Activated T-helper 2 cell treated with anti-CD3 and anti-CD28 coated beads, Interferon-gamma antibody, Interleukin-2, Interleukin-4, amounts not matched to agents 10 μg/mL and 5 μg/mL and 100 μg/mL, durations not matched to agents 14 hours and 24 hours and 36 hours (primary cell): ENCODE measurements at regions of chr7 and their contacts with region 1.

Region 1: DNA sequence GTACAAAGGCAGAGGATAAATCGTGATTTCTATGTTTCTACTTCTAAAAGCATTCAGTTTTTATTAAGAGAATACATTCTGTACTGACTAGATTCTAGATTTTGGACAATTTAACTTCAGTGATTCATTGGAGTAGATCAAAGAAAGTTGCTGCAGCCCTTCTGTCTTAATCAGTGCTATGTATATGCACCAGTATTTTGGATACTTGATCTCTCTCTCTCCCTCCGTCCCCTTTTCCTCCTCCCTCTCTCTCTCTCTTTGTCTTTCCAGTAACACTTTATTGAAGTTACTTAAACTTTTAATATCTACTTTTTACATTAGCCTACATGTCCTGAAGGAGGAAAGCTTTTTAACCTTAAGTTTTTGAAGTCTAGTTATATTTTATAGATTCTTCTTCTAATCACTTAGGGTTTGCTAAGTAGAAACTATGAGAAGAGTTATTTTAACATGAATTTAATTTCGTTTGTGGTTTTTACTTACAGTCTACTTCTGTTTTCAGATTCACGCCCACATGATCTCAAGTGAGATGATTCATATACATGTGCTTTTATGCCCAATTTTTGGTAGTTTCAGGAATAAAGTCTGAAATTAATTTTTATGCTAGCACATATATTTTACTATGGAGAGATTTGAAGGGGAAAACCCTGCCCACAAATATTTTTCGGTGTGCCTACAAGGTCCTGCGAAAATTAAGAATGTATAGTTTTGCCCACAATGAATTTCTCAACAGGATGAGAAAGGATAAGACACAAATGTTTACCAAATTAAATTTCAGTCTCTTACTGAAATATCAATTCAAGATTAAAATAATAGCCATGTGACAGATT is 9.1 kb downstream of the MDFIC start:
- DNase-seq: no peak
- H3K4me3 Mint-ChIP-seq: peak overlapping the region; percentile 79
- H3K27ac Mint-ChIP-seq: no peak overlapping the region
- H3K4me1 Mint-ChIP-seq: peaks cover 25% of the 10 kb centered on the region
- H3K27me3 Mint-ChIP-seq: no peaks in the 10 kb centered on the region

Region 2: GRCh38 chr7:114889646-114890285 is 41.3 kb before region 1 on chr7:
- intact Hi-C with region 1: loop called (anchors 2 kb)
- DNase-seq: no peak
- H3K4me3 Mint-ChIP-seq: no peak overlapping the region
- H3K27ac Mint-ChIP-seq: peak overlapping the region; percentile 84
- H3K4me1 Mint-ChIP-seq: peaks cover 40% of the 10 kb centered on the region
- H3K27me3 Mint-ChIP-seq: no peaks in the 10 kb centered on the region

Region 3: GRCh38 chr7:114942446-114943175 is 11.6 kb after region 1 on chr7:
- intact Hi-C with region 1: loop called (anchors 1 kb)
- DNase-seq: no peak
- H3K4me3 Mint-ChIP-seq: no peak overlapping the region
- H3K27ac Mint-ChIP-seq: peak overlapping the region; percentile 26
- H3K4me1 Mint-ChIP-seq: peaks cover 50% of the 10 kb centered on the region
- H3K27me3 Mint-ChIP-seq: no peaks in the 10 kb centered on the region

Region 4: DNA sequence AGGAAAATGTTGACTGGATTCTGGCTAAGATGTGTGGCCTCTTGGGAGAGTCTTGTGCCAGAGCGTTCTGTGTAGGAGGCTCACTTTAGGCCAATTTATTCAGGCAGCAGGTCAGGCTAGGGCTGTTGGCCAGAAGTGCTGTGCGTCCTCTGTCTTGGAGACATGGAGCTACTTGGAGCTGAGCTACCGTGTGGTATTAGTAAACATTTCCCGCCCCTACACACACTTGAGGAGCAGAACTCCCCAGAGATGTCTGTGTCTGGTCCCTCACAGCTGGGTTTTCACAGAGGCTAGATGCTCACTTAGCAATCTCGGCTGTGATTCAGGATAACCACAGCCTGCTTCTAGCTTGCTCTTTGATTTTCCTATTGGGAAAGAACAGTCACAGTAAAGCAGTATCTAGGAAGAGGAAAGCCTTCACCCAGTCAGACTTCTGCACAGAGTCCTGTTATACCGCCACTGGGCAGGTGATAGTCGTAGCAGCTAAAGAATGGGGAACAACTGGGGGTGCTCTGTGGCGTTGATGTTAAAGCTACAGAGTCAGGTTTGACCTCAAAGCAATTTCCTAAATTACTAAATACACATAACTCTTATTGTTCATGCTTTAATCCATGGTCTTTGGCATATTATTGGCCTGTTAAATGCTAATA is 77.5 kb after region 1 on chr7:
- intact Hi-C with region 1: loop called (anchors 1 kb)
- DNase-seq: no peak
- H3K4me3 Mint-ChIP-seq: peak overlapping the region; percentile 38
- H3K27ac Mint-ChIP-seq: peak overlapping the region; percentile 79
- H3K4me1 Mint-ChIP-seq: peaks cover 78% of the 10 kb centered on the region
- H3K27me3 Mint-ChIP-seq: no peaks in the 10 kb centered on the region